ENCODE measurements at regions of chr10 and their contacts with region 1.

Region 1: DNA sequence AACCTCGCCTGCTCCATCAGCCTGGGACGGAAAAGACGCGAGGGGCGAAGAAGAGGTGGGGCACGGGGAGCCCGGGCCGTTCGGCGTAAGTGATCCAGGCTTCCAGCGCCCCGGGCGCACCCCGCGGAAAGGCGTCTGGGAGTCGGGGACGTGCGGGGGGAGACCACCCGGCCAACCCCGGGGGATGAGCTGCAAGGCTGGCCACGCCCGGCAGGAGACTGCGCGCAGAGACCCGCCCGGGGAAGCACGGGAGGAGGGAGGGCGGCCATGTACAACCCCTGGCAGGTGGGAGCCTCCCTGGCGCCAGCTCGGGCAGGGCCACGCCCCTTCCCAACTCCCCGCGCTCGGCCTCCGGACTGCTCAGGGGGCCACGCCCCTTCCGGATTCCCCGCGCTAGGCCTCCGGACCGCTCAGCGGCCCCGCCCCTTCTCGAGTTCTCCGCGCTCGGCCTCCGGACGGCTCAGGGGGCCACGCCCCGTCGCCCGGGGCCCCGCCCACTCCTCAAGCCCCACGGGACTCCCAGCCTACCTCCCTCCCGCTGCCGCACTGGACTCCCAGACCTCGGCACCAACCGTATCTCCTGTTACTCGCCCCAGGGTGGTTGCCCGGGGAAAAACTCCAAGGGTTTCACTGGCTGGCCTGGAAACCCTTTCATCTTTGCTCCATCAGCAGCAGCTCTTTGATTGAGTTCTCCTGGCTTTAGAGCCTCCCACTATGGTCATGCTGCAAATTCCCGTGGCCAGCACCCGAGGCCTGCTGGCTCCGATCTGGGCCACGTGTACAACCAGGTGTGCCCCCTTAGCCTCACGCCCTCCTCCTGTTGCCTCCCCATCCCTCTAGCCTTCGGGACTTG is 284.4 kb downstream of the ZEB1 start:
- DNase-seq: peak; percentile 97
- ATAC-seq: peak; percentile 96

Region 2: GRCh38 chr10:30751678-30752331 is 851.7 kb before region 1 on chr10:
- intact Hi-C with region 1: loop called (anchors 10 kb)
- DNase-seq: peak; percentile 88
- ATAC-seq: peak; percentile 78

Region 3: DNA sequence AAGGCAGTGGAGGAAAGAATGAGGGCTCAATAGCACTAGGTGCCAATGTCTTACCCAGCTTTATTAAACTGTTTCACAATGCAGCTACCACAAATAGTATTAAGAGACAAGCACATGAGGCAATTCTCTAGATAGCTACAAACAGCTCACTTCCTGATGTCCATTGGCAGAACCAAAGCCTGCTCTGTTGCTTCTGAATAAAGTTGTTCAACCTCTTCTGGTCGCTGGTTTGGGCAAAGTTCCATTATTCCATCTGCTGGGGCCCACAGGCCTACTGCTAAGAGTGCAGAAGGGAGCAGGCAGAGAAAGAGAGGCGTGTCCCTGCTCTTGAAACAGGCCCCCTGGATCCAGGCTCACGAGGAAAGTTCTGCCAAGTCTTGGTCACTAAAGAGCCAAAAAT is 745.7 kb before region 1 on chr10:
- intact Hi-C with region 1: loop called (anchors 5 kb)
- DNase-seq: peak; percentile 84
- ATAC-seq: peak; percentile 96

Region 4: GRCh38 chr10:31630861-31631567 is 27.6 kb after region 1 on chr10:
- intact Hi-C with region 1: loop called (anchors 2 kb)
- DNase-seq: no peak
- ATAC-seq: peak; percentile 76

Region 5: GRCh38 chr10:31697271-31698180 is 94.1 kb after region 1 on chr10:
- intact Hi-C with region 1: loop called (anchors 5 kb)
- DNase-seq: peak; percentile 93
- ATAC-seq: peak; percentile 82

Region 6: GRCh38 chr10:31759799-31760626 is 156.6 kb after region 1 on chr10:
- intact Hi-C with region 1: loop called (anchors 2 kb)
- DNase-seq: peak; percentile 98
- ATAC-seq: peak; percentile 96

Region 7: DNA sequence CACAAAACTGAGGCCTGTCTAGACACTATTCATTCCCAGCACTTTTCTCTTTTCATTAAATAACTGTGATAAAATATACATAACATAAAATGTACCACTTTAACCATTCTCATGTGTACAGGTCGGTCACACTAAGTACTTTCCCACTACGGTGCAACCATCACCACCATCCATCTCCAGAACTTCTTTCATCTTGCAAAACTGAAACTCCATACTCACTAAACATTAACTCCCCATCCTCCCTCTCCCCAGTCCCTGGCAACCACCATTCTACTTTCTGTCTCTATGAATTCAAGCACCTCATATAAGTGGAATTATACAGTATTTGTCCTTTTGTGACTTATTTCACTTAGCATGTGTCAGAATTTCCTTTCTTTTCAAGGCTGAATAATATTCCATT is 272.1 kb after region 1 on chr10:
- intact Hi-C with region 1: no loop called
- DNase-seq: no peak
- ATAC-seq: no peak